HepG2 (cell line): ENCODE measurements at regions of chr4 and their contacts with region 1.

Region 1: DNA sequence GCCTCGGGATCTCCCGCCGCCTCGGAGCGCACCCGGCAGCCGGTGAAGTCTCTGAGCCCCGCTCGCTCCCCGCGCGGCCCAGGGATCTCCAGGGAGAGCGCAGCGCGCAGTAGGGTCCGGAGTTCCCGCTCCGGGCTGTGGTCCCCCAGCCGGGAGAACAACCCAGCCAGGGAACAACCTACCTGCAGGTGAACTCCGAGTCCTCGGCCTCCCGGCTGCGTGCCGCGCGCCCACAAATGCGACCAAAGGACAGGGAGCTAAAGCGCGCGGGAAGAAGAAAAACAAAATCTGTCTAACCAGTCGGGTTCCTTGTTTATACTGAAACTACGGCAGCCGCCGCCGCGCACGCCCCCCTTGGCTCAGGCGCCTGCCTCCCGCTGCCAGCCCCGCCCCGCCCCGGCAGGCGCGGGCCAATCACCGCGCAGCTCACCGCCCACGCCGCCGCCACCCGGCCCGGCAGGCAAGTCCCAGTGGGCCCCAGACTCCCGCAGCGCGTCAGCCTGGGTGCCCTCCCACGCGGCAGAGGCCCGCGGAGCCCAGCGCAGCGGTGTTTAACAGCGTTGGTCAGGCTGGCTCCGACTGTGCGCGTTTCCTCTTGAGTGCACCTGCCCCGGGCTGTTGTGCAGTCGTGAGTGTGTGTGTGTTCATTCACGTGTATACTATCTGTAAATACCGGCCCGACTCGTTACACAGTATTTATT is at the start of gene RASGEF1B:
- DNase-seq: peak; percentile 32
- ATAC-seq: peak; percentile 97
- H3K4me3 ChIP-seq: peak within 1 kb of the TSS; percentile 47 to 66 (median 57)
- H3K27ac ChIP-seq: no peak within 1 kb of the TSS
- H3K4me1 ChIP-seq: peaks cover 18% of the 10 kb centered on the region
- H3K27me3 ChIP-seq: peaks cover 4 to 18% of the 10 kb centered on the region in 2 experiments
- CTCF ChIP-seq: no peak
- EP300 ChIP-seq: no peak
- POLR2A ChIP-seq: no peak
- RAD21 ChIP-seq: no peak
- total RNA-seq, gene RASGEF1B: 0.04 TPM in 1 of 2 replicates, not detected in the other

Region 2: DNA sequence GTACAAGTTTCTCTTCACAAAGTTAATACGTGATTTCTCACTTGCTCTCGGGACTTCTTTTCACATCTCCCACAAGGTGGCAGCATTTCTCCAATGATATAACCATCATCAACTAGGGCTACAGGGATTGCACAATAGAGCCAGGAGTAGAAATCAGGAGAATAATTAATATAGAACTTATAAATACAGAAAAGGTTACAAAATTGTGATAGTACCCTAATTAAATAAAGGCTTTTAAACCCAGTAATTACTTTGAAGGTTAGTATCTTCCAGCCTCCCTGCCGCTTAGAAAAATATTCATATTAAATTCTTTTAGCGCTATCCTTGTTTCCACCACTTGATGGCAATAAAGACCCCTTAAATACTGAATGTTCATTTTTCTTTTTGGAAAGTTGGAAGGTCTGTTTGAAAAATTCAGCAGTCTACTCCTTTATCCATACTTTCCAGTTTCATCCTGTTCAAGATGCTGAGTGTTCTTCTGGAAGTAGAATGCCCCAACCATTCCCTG is 65.8 kb before region 1 on chr4:
- CTCF ChIA-PET with region 1: interaction called, 7 read pairs
- POLR2A ChIA-PET with region 1: no interaction called
- in situ Hi-C with region 1: no loop called
- intact Hi-C with region 1: loop called (anchors 1 kb)
- DNase-seq: peak; percentile 81
- ATAC-seq: peak; percentile 78
- H3K4me3 ChIP-seq: no peak overlapping the region
- H3K27ac ChIP-seq: no peak overlapping the region
- H3K4me1 ChIP-seq: no peaks in the 10 kb centered on the region
- H3K27me3 ChIP-seq: no peaks in the 10 kb centered on the region; a peak in 1 of 5 replicates
- CTCF ChIP-seq: peak; percentile 75
- EP300 ChIP-seq: no peak
- POLR2A ChIP-seq: no peak
- RAD21 ChIP-seq: peak; percentile 62; the same call in 1 of the 2 replicates

Region 3: DNA sequence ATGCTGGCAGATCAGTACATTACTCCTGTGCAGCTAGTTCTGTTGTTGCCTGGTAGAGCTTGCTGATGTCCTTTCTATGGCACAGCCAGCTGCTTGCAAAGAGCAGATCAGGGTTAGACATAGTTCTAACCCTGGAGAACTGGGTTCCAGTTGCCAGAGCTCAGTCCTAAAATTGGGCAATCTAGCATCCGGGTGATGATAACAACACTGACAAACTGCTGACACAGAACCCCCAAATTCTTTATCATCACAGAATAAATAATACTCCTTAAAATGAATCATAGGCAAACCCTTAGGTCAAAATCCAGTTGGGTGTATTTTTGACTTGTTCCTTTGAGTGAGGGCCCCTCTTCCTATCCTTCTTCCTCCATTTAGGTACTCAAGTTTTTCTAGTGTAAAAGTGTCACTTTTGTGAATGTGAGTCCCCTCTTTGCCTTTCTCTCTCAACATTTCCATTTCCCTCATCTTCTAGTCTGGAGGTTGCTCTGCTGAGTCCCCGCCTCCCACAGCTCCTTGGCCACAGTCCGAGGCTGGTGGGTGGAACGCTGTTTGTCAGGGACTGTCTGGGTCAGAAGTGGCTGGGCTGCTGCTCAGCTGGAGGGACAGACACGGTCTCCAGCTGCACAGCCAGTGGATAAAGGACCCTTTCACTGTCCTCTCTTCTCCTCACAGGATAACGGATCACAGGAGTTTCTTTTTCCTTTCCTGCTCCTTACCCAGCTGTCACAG is 93.6 kb after region 1 on chr4:
- CTCF ChIA-PET with region 1: no interaction called
- POLR2A ChIA-PET with region 1: no interaction called
- in situ Hi-C with region 1: no loop called
- intact Hi-C with region 1: no loop called
- DNase-seq: no peak
- ATAC-seq: peak; percentile 46; the same call in 1 of the 3 replicates
- H3K4me3 ChIP-seq: no peak overlapping the region
- H3K27ac ChIP-seq: no peak overlapping the region
- H3K4me1 ChIP-seq: no peaks in the 10 kb centered on the region
- H3K27me3 ChIP-seq: no peaks in the 10 kb centered on the region
- CTCF ChIP-seq: no peak
- EP300 ChIP-seq: no peak
- POLR2A ChIP-seq: no peak
- RAD21 ChIP-seq: no peak

Region 4: GRCh38 chr4:81688085-81688484 is 216.3 kb after region 1 on chr4:
- CTCF ChIA-PET with region 1: no interaction called
- POLR2A ChIA-PET with region 1: no interaction called
- in situ Hi-C with region 1: no loop called
- intact Hi-C with region 1: loop called (anchors 1 kb)
- DNase-seq: no peak
- ATAC-seq: peak; percentile 64; the same call in 2 of the 3 replicates
- H3K4me3 ChIP-seq: no peak overlapping the region
- H3K27ac ChIP-seq: no peak overlapping the region
- H3K4me1 ChIP-seq: no peaks in the 10 kb centered on the region
- H3K27me3 ChIP-seq: 0 out of 5 replicates have a peak, but pooled peaks cover 0 to 4% of the 10 kb centered on the region in 2 experiments
- CTCF ChIP-seq: no peak
- EP300 ChIP-seq: no peak
- POLR2A ChIP-seq: no peak
- RAD21 ChIP-seq: no peak

Region 5: GRCh38 chr4:81844717-81845116 is 373.0 kb after region 1 on chr4:
- CTCF ChIA-PET with region 1: interaction called, 41 read pairs
- POLR2A ChIA-PET with region 1: no interaction called
- in situ Hi-C with region 1: loop called (anchors 5 kb)
- intact Hi-C with region 1: loop called (anchors 1 kb)
- DNase-seq: peak; percentile 70
- ATAC-seq: peak; percentile 93
- H3K4me3 ChIP-seq: no peak overlapping the region
- H3K27ac ChIP-seq: no peak overlapping the region
- H3K4me1 ChIP-seq: no peaks in the 10 kb centered on the region
- H3K27me3 ChIP-seq: no peaks in the 10 kb centered on the region
- CTCF ChIP-seq: peak; percentile 73
- EP300 ChIP-seq: no peak
- POLR2A ChIP-seq: no peak
- RAD21 ChIP-seq: peak; percentile 46; the same call in 1 of the 2 replicates

Region 6: GRCh38 chr4:81919238-81919637 is 447.5 kb after region 1 on chr4:
- CTCF ChIA-PET with region 1: no interaction called
- POLR2A ChIA-PET with region 1: no interaction called
- in situ Hi-C with region 1: no loop called
- intact Hi-C with region 1: loop called (anchors 1 kb)
- DNase-seq: peak; percentile 21
- ATAC-seq: peak; percentile 99
- H3K4me3 ChIP-seq: no peak overlapping the region
- H3K27ac ChIP-seq: no peak overlapping the region
- H3K4me1 ChIP-seq: no peaks in the 10 kb centered on the region
- H3K27me3 ChIP-seq: no peaks in the 10 kb centered on the region
- CTCF ChIP-seq: peak; percentile 29; the same call in 1 of the 2 replicates
- EP300 ChIP-seq: no peak
- POLR2A ChIP-seq: no peak
- RAD21 ChIP-seq: no peak

Region 7: DNA sequence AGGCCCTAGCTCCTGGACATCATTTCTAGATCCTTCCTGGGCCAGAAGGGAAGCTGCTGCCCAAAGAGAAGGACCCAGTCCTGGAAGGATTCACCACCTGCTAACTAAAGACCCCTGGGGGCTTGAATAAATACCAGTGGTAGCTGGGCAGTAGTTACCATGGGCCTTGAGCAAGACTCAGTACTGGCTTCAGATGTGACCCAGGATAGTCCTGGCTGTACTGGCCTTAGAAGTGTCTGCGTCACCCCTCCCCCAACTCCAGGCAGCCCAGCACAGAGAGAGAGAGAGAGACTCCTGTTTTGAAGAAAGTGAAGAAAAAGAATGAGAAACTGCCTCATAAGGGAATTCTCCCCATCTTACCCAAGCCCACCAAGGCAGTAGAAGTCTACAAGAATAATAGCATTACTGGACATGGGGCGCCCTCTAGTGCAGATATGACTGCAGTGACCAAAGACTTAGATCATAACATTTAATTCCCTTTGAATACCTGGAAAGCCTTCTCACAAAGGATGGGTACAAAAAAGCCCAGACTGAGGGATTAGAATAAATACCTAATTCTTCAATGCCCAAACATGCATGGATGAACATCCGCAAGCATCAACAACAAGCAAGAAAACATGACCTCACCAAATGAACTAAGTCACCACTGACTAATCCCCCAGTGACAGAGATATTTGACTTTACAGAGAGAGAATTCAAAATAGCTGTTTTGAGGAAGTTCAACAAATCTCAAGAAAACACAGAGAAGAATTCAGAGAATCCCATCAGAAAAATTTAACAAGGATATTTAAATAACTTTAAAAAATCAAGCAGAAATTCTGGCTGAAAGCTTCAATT is 730.3 kb after region 1 on chr4:
- CTCF ChIA-PET with region 1: interaction called, 15 read pairs
- POLR2A ChIA-PET with region 1: no interaction called
- in situ Hi-C with region 1: loop called (anchors 5 kb)
- intact Hi-C with region 1: loop called (anchors 1 kb)
- DNase-seq: peak; percentile 49
- ATAC-seq: peak; percentile 90
- H3K4me3 ChIP-seq: no peak overlapping the region
- H3K27ac ChIP-seq: no peak overlapping the region
- H3K4me1 ChIP-seq: no peaks in the 10 kb centered on the region
- H3K27me3 ChIP-seq: no peaks in the 10 kb centered on the region
- CTCF ChIP-seq: peak; percentile 83
- EP300 ChIP-seq: no peak
- POLR2A ChIP-seq: no peak
- RAD21 ChIP-seq: peak; percentile 66; the same call in 1 of the 2 replicates

Region 8: GRCh38 chr4:82268050-82268825 is 796.5 kb after region 1 on chr4:
- CTCF ChIA-PET with region 1: interaction called, 3 read pairs
- POLR2A ChIA-PET with region 1: no interaction called
- in situ Hi-C with region 1: no loop called
- intact Hi-C with region 1: loop called (anchors 2 kb)
- DNase-seq: peak; percentile 51
- ATAC-seq: peak; percentile 99
- H3K4me3 ChIP-seq: no peak overlapping the region
- H3K27ac ChIP-seq: no peak overlapping the region
- H3K4me1 ChIP-seq: peaks cover 20% of the 10 kb centered on the region
- H3K27me3 ChIP-seq: no peaks in the 10 kb centered on the region; a peak in 1 of 5 replicates
- CTCF ChIP-seq: peak; percentile 82
- EP300 ChIP-seq: no peak
- POLR2A ChIP-seq: no peak
- RAD21 ChIP-seq: no peak; the same call in 1 of the 2 replicates